ENCODE measurements at regions of chr11 and their contacts with region 1.

Region 1: DNA sequence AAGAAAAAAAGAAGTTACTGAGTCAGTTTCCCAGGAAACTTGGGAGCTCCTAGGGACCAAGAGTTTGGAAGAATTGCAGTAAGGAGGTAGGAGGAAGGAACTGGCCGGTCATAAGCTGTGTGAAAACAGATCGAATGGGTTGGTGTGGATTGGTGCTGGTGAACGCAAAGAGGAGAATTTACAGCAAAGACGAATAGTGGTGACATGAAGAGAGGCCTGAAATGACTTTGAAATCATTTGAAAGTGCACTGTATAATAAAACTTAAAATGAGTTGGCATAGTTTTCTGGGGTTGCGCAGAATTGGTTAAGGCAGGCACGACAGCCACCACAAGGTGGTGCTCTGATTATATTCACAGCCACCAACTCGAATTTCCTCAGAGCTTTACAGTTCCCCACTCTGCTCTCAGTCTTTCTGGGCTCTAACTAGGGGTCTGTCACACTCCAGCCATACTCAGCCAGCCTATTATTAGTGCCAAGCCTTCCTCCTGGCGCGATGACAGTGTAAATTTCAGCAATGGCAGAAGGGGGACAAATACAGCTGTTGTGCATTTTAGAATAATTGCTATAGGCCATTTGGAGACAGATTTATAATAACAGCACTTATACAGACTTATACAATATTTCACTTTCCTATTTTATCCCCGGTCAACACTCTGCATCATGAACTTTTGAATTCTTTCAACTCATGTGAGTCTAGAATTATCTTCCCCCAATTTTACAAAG is 8.3 kb upstream of the HTR3B start:
- DNase-seq: peak; percentile 37
- ATAC-seq: peak; percentile 80
- H3K4me3 Mint-ChIP-seq: no peak overlapping the region
- H3K27ac Mint-ChIP-seq: no peak overlapping the region
- H3K4me1 Mint-ChIP-seq: peaks cover 26% of the 10 kb centered on the region
- H3K27me3 Mint-ChIP-seq: no peaks in the 10 kb centered on the region
- CTCF ChIP-seq: peak; percentile 49; the same call in 1 of the 2 replicates

Region 2: DNA sequence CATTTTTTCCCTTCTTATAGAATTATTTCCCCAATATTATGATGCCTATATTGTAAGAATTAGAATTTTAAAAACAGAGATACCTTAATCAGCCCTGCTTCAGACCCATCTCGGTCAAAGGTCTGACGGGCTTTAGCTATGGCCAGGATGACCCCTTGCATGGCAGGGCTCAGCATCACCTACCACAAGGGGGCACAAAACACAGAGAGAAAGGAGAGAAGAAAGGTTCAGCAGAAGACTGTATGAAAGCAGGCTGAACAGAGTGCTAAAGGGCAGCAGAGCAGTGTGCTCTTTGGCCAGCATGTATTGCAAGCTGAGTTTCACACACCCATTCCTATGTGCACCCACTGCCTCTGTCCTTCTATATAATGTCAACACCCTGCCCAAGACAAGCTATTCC is 89.9 kb before region 1 on chr11:
- CTCF ChIA-PET with region 1: interaction called, 45 read pairs
- POLR2A ChIA-PET with region 1: no interaction called
- DNase-seq: peak; percentile 68
- ATAC-seq: peak; percentile 99
- H3K4me3 Mint-ChIP-seq: no peak overlapping the region
- H3K27ac Mint-ChIP-seq: no peak overlapping the region
- H3K4me1 Mint-ChIP-seq: no peaks in the 10 kb centered on the region
- H3K27me3 Mint-ChIP-seq: no peaks in the 10 kb centered on the region
- CTCF ChIP-seq: peak; percentile 35; the same call in 1 of the 2 replicates

Region 3: DNA sequence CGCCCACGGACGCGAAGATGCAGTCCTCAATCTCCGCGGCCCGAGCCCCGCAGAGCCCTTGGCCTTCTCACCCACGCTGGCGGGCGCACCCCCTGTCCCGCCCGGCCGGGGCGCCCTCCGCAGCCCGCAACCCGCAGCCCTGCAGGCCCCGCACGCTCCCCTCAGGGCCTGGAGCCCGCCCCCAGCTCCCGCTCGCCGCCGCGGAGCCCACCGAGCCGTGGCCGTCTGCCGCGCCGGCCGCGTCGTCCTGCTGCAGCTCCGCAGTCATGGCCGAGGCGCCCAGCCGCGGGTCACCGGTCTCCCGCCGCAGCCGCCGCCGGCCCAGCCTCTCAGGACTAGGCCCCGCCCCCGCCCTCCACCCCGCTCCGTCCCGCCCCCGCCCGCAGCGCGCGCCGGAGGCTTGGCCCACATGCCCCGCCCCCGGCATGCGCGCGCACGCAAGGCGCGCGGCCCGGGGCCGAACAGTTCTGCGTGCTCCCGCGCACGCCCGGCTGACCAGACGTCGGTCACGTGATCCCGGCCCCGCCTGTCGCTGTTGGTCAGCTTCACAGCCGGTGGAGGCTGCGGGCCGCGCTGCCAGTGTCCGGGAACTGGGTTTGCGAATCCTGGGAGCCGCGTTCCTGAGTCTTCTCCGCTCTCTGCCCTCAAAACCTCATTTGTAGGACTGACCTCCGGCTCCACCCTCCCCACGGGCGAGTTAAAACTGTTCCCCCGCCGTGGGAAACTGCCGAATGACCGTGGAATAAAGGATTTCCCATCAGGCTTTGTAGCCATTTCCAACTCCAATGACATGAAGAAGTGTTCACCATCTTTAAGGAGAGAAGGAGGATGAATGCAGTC is 20.9 kb before region 1 on chr11 and contains the start of gene USP28:
- CTCF ChIA-PET with region 1: interaction called, 18 read pairs
- POLR2A ChIA-PET with region 1: interaction called, 3 read pairs
- DNase-seq: peak; percentile 95
- ATAC-seq: peak; percentile 89
- H3K4me3 Mint-ChIP-seq: peak within 1 kb of the TSS; percentile 89
- H3K27ac Mint-ChIP-seq: peak within 1 kb of the TSS; percentile 100
- H3K4me1 Mint-ChIP-seq: peaks cover 52% of the 10 kb centered on the region
- H3K27me3 Mint-ChIP-seq: peaks cover 2% of the 10 kb centered on the region; the same call in 1 of the 2 replicates
- CTCF ChIP-seq: no peak
- total RNA-seq, gene USP28: 129 to 142 TPM (median 138 TPM) in 3 replicates

Region 4: DNA sequence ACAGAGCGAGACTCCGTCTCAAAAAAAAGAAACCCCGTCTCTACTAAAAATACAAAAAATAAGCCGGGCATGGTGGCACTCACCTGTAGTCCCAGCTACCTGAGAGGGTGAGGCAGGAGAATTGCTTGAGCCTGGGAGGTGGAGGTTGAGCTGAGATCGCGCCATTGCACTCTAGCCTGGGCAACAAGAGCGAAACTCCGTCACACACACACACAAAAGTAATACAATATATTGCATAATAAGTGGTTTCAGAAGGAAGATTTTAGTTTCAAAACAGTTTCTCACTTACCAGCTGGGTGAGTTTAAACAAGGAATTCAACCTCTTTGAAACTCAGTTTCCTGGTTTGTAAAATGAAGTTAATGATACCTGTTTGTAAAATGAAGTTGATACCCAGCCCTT is 45.9 kb after region 1 on chr11:
- CTCF ChIA-PET with region 1: interaction called, 27 read pairs
- POLR2A ChIA-PET with region 1: no interaction called
- DNase-seq: no peak
- ATAC-seq: no peak
- H3K4me3 Mint-ChIP-seq: no peak overlapping the region
- H3K27ac Mint-ChIP-seq: no peak overlapping the region
- H3K4me1 Mint-ChIP-seq: no peaks in the 10 kb centered on the region
- H3K27me3 Mint-ChIP-seq: no peaks in the 10 kb centered on the region
- CTCF ChIP-seq: no peak

Region 5: GRCh38 chr11:113974741-113975470 is 78.6 kb after region 1 on chr11 and contains the start of gene HTR3A:
- CTCF ChIA-PET with region 1: interaction called, 47 read pairs
- POLR2A ChIA-PET with region 1: no interaction called
- DNase-seq: peak; percentile 63
- ATAC-seq: peak; percentile 90
- H3K4me3 Mint-ChIP-seq: peak within 1 kb of the TSS; percentile 50
- H3K27ac Mint-ChIP-seq: no peak within 1 kb of the TSS; the same call in 1 of the 2 replicates
- H3K4me1 Mint-ChIP-seq: peaks cover 30% of the 10 kb centered on the region
- H3K27me3 Mint-ChIP-seq: peaks cover 9% of the 10 kb centered on the region; the same call in 1 of the 2 replicates
- CTCF ChIP-seq: no peak
- total RNA-seq, gene HTR3A: 4.1 to 6.0 TPM (median 5.0 TPM) in 3 replicates

Region 6: DNA sequence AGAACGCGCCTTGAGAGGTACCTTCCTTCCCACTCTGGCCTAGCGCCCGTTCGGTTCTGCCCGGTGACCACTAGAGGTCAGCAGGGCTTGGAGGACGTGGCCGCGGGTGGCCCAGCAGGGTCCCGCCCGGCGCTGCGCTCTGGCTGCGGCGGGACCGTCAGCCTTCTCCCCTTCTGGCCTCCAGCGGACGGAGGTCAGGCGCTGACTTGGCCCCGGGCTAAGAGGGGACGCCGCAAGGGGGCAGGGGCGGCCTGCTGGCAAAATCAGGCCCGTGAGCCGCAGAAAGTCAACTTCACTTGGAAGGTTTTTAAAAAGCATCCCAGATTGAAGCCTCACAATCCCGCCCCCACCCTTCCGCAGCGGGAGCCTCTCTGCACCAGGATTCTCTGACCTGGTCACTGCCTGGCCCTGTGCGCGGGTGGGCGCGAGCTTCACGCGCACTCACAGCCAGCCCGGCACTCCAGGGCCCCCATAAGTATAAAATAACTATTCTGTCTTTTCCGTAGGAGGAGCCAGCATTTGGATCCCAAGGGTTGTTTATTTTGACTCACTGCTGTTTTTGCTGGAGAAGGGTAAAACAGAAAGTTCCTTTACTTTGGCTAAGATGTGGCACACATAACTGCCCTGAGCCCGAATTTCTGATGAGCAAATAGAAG is 140.0 kb after region 1 on chr11:
- CTCF ChIA-PET with region 1: interaction called, 20 read pairs
- POLR2A ChIA-PET with region 1: no interaction called
- DNase-seq: peak; percentile 90
- ATAC-seq: peak; percentile 95
- H3K4me3 Mint-ChIP-seq: peak overlapping the region; percentile 50
- H3K27ac Mint-ChIP-seq: no peak overlapping the region
- H3K4me1 Mint-ChIP-seq: no peaks in the 10 kb centered on the region
- H3K27me3 Mint-ChIP-seq: no peaks in the 10 kb centered on the region
- CTCF ChIP-seq: peak; percentile 62

Region 7: GRCh38 chr11:114257621-114258558 is 361.6 kb after region 1 on chr11:
- CTCF ChIA-PET with region 1: interaction called, 74 read pairs
- POLR2A ChIA-PET with region 1: interaction called, 3 read pairs
- DNase-seq: peak; percentile 34
- ATAC-seq: peak; percentile 50
- H3K4me3 Mint-ChIP-seq: no peak overlapping the region
- H3K27ac Mint-ChIP-seq: no peak overlapping the region
- H3K4me1 Mint-ChIP-seq: peaks cover 17% of the 10 kb centered on the region
- H3K27me3 Mint-ChIP-seq: no peaks in the 10 kb centered on the region; the same call in 1 of the 2 replicates
- CTCF ChIP-seq: no peak